Naive thymus-derived CD4-positive, alpha-beta T cell (primary cell): ENCODE measurements at regions of chr19 and their contacts with region 1.

Region 1: GRCh38 chr19:48738557-48739399 is 1.6 kb downstream of the RASIP1 start:
- DNase-seq: peak; percentile 73 to 95 (median 84)
- ATAC-seq: peak; percentile 97
- H3K4me3 ChIP-seq: peak overlapping the region; percentile 53
- H3K4me3 Mint-ChIP-seq: peak overlapping the region in 9 of 10 donors; percentile 48 to 74 (median 66)
- H3K27ac ChIP-seq: peak overlapping the region; percentile 41
- H3K27ac Mint-ChIP-seq: peak overlapping the region in 7 of 9 donors; percentile 17 to 68 (median 52)
- H3K4me1 ChIP-seq: peaks cover 4 to 26% of the 10 kb centered on the region in 2 donors
- H3K4me1 Mint-ChIP-seq: peaks cover 7 to 22% (median 17%) of the 10 kb centered on the region in 7 donors
- H3K27me3 ChIP-seq: no peaks in the 10 kb centered on the region
- H3K27me3 Mint-ChIP-seq: peaks cover 0 to 20% (median 0%) of the 10 kb centered on the region in 5 donors

Region 2: GRCh38 chr19:48492925-48493717 is 245.7 kb before region 1 on chr19:
- CTCF ChIA-PET with region 1: no interaction called
- POLR2A ChIA-PET with region 1: no interaction called
- intact Hi-C with region 1: loop called in 1 of 2 experiments (anchors 5 kb)
- DNase-seq: peak; percentile 69 to 87 (median 78)
- ATAC-seq: peak; percentile 87
- H3K4me3 ChIP-seq: peak overlapping the region; percentile 41
- H3K4me3 Mint-ChIP-seq: peak overlapping the region; percentile 58 to 84 (median 72)
- H3K27ac ChIP-seq: no peak overlapping the region
- H3K27ac Mint-ChIP-seq: peak overlapping the region; percentile 20 to 86 (median 67)
- H3K4me1 ChIP-seq: peaks cover 4 to 25% of the 10 kb centered on the region in 2 donors
- H3K4me1 Mint-ChIP-seq: peaks cover 17 to 51% (median 43%) of the 10 kb centered on the region in 7 donors
- H3K27me3 ChIP-seq: no peaks in the 10 kb centered on the region
- H3K27me3 Mint-ChIP-seq: peaks cover 0 to 57% (median 6%) of the 10 kb centered on the region in 5 donors

Region 3: GRCh38 chr19:48674921-48675824 is 63.6 kb before region 1 on chr19:
- CTCF ChIA-PET with region 1: no interaction called
- POLR2A ChIA-PET with region 1: interaction called, 6 read pairs
- intact Hi-C with region 1: loop called in 1 of 2 experiments (anchors 1 kb)
- DNase-seq: peak; percentile 57 to 81 (median 72)
- ATAC-seq: peak; percentile 94
- H3K4me3 ChIP-seq: no peak overlapping the region
- H3K4me3 Mint-ChIP-seq: peak overlapping the region in 1 of 10 donors; percentile 47
- H3K27ac ChIP-seq: no peak overlapping the region
- H3K27ac Mint-ChIP-seq: peak overlapping the region in 7 of 9 donors; percentile 11 to 79 (median 49)
- H3K4me1 ChIP-seq: peaks cover 6 to 7% of the 10 kb centered on the region in 2 donors
- H3K4me1 Mint-ChIP-seq: peaks cover 3 to 8% (median 7%) of the 10 kb centered on the region in 7 donors
- H3K27me3 ChIP-seq: no peaks in the 10 kb centered on the region
- H3K27me3 Mint-ChIP-seq: no peaks in the 10 kb centered on the region

Region 4: DNA sequence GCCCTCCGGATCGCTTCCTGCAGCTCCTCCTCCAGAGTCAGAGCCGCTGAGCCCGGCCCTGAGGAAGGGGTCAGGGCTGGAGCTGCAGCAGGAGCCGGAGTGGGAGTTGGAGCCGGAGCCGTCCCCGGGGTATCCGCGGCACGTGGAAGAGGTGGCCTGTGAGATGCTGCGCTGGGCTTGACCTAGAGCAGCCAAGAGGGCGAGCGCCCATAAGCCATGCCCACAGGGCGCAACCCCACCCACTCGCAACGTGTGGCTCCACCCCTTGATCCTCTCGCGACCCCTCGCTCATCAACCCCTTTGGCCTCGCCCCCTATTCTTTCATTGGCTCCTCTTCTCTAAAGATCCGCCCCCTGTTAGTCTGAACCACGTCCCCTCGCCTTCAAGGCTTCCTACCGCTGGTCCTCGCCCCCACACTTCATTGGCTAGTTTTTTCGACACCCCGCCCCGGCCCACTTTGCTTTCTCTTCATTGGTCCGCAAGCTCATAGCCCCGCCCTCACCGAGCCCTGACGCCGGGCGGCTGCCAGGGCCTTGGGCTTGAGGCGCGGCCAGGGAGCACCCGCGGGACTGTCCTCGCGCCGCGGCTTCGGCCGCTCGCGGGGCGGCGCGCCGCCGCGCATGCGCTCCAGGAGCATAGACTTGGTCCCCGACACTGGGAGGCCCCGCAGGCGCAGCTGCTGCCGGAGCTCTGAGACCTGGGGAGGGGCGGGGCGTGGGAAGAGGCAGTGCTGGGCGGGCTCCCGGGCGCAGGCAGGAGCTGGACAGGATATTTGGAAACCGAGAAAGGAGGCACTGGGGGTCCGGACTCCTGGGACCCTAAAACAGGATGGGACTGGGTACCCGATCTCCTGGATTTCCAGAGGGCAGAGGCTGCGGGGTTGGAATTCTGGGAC is 24.7 kb before region 1 on chr19:
- CTCF ChIA-PET with region 1: interaction called, 3 read pairs
- POLR2A ChIA-PET with region 1: interaction called, 7 read pairs
- intact Hi-C with region 1: loop called (anchors 1 kb)
- DNase-seq: peak; percentile 92 to 97 (median 97)
- ATAC-seq: peak; percentile 96
- H3K4me3 ChIP-seq: peak overlapping the region; percentile 95
- H3K4me3 Mint-ChIP-seq: peak overlapping the region; percentile 82 to 92 (median 88)
- H3K27ac ChIP-seq: peak overlapping the region; percentile 79
- H3K27ac Mint-ChIP-seq: peak overlapping the region; percentile 16 to 90 (median 81)
- H3K4me1 ChIP-seq: peaks cover 11 to 12% of the 10 kb centered on the region in 2 donors
- H3K4me1 Mint-ChIP-seq: peaks cover 9 to 24% (median 20%) of the 10 kb centered on the region in 7 donors
- H3K27me3 ChIP-seq: no peaks in the 10 kb centered on the region
- H3K27me3 Mint-ChIP-seq: no peaks in the 10 kb centered on the region

Region 5: GRCh38 chr19:48752498-48753365 is 14.0 kb after region 1 on chr19 and contains the start of gene FUT1:
- CTCF ChIA-PET with region 1: interaction called, 4 read pairs
- POLR2A ChIA-PET with region 1: no interaction called
- intact Hi-C with region 1: loop called in 1 of 2 experiments (anchors 2 kb)
- DNase-seq: peak in 3 of 9 donors; percentile 19 to 58 (median 34)
- ATAC-seq: peak; percentile 72
- H3K4me3 ChIP-seq: peak within 1 kb of the TSS; percentile 40
- H3K4me3 Mint-ChIP-seq: peak within 1 kb of the TSS; percentile 77 to 96 (median 88)
- H3K27ac ChIP-seq: no peak within 1 kb of the TSS
- H3K27ac Mint-ChIP-seq: peak within 1 kb of the TSS in 2 of 9 donors; percentile 38 to 88
- H3K4me1 ChIP-seq: peaks cover 5 to 14% of the 10 kb centered on the region in 2 donors
- H3K4me1 Mint-ChIP-seq: peaks cover 6 to 25% (median 17%) of the 10 kb centered on the region in 7 donors
- H3K27me3 ChIP-seq: no peaks in the 10 kb centered on the region
- H3K27me3 Mint-ChIP-seq: peaks cover 0 to 33% (median 28%) of the 10 kb centered on the region in 5 donors
- total RNA-seq, gene FUT1: 0.17 TPM in 1 of 5 experiments, not detected in the others

Region 6: GRCh38 chr19:48812094-48812929 is 73.5 kb after region 1 on chr19:
- CTCF ChIA-PET with region 1: no interaction called
- POLR2A ChIA-PET with region 1: no interaction called
- intact Hi-C with region 1: loop called in 1 of 2 experiments (anchors 2 kb)
- DNase-seq: peak in 8 of 9 donors; percentile 25 to 68 (median 48)
- ATAC-seq: peak; percentile 65
- H3K4me3 ChIP-seq: no peak overlapping the region
- H3K4me3 Mint-ChIP-seq: peak overlapping the region; percentile 76 to 89 (median 82)
- H3K27ac ChIP-seq: peak overlapping the region; percentile 40
- H3K27ac Mint-ChIP-seq: peak overlapping the region; percentile 54 to 87 (median 78)
- H3K4me1 ChIP-seq: peaks cover 10% of the 10 kb centered on the region in 2 donors
- H3K4me1 Mint-ChIP-seq: peaks cover 16 to 49% (median 41%) of the 10 kb centered on the region in 7 donors
- H3K27me3 ChIP-seq: no peaks in the 10 kb centered on the region
- H3K27me3 Mint-ChIP-seq: no peaks in the 10 kb centered on the region